A673 (cell line): ENCODE measurements at regions of chr4 and their contacts with region 1.

Region 1: GRCh38 chr4:186725469-186726425 is 2.1 kb upstream of the FAT1 start:
- DNase-seq: peak; percentile 89
- H3K4me3 ChIP-seq: peak overlapping the region; percentile 81
- H3K27ac ChIP-seq: peak overlapping the region; percentile 51
- H3K4me1 ChIP-seq: peaks cover 18% of the 10 kb centered on the region
- H3K27me3 ChIP-seq: no peaks in the 10 kb centered on the region
- CTCF ChIP-seq: peak; percentile 91

Region 2: GRCh38 chr4:186272699-186273391 is 452.9 kb before region 1 on chr4:
- CTCF ChIA-PET with region 1: no interaction called
- POLR2A ChIA-PET with region 1: no interaction called
- intact Hi-C with region 1: no loop called
- DNase-seq: no peak
- H3K4me3 ChIP-seq: no peak overlapping the region
- H3K27ac ChIP-seq: no peak overlapping the region
- H3K4me1 ChIP-seq: no peaks in the 10 kb centered on the region
- H3K27me3 ChIP-seq: no peaks in the 10 kb centered on the region
- CTCF ChIP-seq: no peak

Region 3: DNA sequence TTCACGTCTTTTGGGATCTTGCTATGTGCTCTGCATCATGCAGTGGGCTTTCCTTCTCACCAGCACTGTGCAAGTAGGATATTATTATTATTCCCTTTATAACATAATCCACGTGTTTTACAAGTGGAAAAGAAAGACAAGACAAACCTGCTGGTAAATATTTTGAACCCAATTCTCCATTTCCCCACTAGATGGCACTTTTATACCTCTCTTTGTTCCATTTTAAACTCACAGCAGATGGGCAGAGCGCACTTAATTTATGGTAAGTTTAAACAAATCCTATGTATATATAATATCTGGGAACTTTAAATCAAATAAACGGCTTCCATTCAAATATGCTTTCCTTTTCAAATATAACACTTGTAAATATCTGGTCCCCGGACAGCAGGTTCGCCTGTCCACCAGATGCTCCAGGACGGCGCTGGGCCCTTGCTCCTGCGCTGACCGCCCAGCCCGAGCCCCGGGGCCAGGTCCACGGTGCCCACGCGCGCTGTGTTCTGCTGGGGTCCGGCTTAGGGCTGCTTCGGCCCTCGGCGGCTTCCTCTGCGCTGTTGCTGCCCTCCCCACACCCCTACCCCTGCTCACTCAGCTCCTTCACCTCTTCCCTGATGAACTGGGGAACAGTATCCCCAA is 428.6 kb before region 1 on chr4:
- CTCF ChIA-PET with region 1: no interaction called
- POLR2A ChIA-PET with region 1: no interaction called
- intact Hi-C with region 1: loop called (anchors 2 kb)
- DNase-seq: peak; percentile 79
- H3K4me3 ChIP-seq: no peak overlapping the region
- H3K27ac ChIP-seq: no peak overlapping the region
- H3K4me1 ChIP-seq: no peaks in the 10 kb centered on the region
- H3K27me3 ChIP-seq: no peaks in the 10 kb centered on the region
- CTCF ChIP-seq: peak; percentile 74

Region 4: GRCh38 chr4:186669159-186669731 is 56.5 kb before region 1 on chr4:
- CTCF ChIA-PET with region 1: no interaction called
- POLR2A ChIA-PET with region 1: no interaction called
- intact Hi-C with region 1: loop called (anchors 1 kb)
- DNase-seq: peak; percentile 80
- H3K4me3 ChIP-seq: no peak overlapping the region
- H3K27ac ChIP-seq: no peak overlapping the region
- H3K4me1 ChIP-seq: peaks cover 33% of the 10 kb centered on the region
- H3K27me3 ChIP-seq: no peaks in the 10 kb centered on the region
- CTCF ChIP-seq: peak; percentile 69

Region 5: GRCh38 chr4:186820391-186820891 is 94.7 kb after region 1 on chr4:
- CTCF ChIA-PET with region 1: no interaction called
- POLR2A ChIA-PET with region 1: no interaction called
- intact Hi-C with region 1: loop called (anchors 5 kb)
- DNase-seq: peak; percentile 98
- H3K4me3 ChIP-seq: no peak overlapping the region
- H3K27ac ChIP-seq: no peak overlapping the region
- H3K4me1 ChIP-seq: peaks cover 35% of the 10 kb centered on the region
- H3K27me3 ChIP-seq: no peaks in the 10 kb centered on the region
- CTCF ChIP-seq: no peak

Region 6: GRCh38 chr4:186932631-186933187 is 207.0 kb after region 1 on chr4:
- CTCF ChIA-PET with region 1: no interaction called
- POLR2A ChIA-PET with region 1: interaction called, 3 read pairs
- intact Hi-C with region 1: loop called (anchors 5 kb)
- DNase-seq: peak; percentile 86
- H3K4me3 ChIP-seq: no peak overlapping the region
- H3K27ac ChIP-seq: no peak overlapping the region
- H3K4me1 ChIP-seq: peaks cover 21% of the 10 kb centered on the region
- H3K27me3 ChIP-seq: peaks cover 32% of the 10 kb centered on the region
- CTCF ChIP-seq: no peak

Region 7: GRCh38 chr4:187158003-187158402 is 432.3 kb after region 1 on chr4:
- CTCF ChIA-PET with region 1: no interaction called
- POLR2A ChIA-PET with region 1: no interaction called
- intact Hi-C with region 1: loop called (anchors 10 kb)
- DNase-seq: no peak
- H3K4me3 ChIP-seq: no peak overlapping the region
- H3K27ac ChIP-seq: no peak overlapping the region
- H3K4me1 ChIP-seq: no peaks in the 10 kb centered on the region
- H3K27me3 ChIP-seq: peaks cover 41% of the 10 kb centered on the region
- CTCF ChIP-seq: no peak

Region 8: DNA sequence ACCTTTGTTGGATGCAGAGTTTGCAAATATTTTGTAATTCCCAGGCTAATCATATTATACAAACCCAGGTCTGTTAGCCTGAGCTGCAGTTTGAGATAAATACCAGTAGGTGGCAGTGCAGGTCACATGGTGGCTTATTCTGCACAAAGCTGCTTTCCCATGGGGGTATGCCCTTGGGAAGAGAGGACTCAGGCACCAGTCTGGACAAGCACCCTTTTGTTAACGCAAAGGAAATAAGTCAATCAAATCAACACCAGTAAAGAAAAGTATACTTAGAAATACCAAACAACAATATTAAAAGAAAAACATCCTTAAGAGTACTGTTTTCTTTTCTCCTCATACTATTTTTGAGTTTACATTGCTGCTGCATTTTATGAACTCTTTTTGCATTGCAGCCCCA is 880.8 kb after region 1 on chr4:
- CTCF ChIA-PET with region 1: no interaction called
- POLR2A ChIA-PET with region 1: no interaction called
- intact Hi-C with region 1: loop called (anchors 5 kb)
- DNase-seq: peak; percentile 84
- H3K4me3 ChIP-seq: no peak overlapping the region
- H3K27ac ChIP-seq: no peak overlapping the region
- H3K4me1 ChIP-seq: peaks cover 32% of the 10 kb centered on the region
- H3K27me3 ChIP-seq: no peaks in the 10 kb centered on the region
- CTCF ChIP-seq: peak; percentile 95